GM12878 (cell line): ENCODE measurements at regions of chr3 and their contacts with region 1.

Region 1: GRCh38 chr3:14691239-14691638 is 16.3 kb downstream of the C3orf20 start:
- DNase-seq: peak; percentile 74
- ATAC-seq: peak; percentile 69
- H3K4me3 ChIP-seq: peak overlapping the region; percentile 4; the same call in 1 of the 2 replicates
- H3K27ac ChIP-seq: peak overlapping the region; percentile 76
- H3K4me1 ChIP-seq: peaks cover 47% of the 10 kb centered on the region
- H3K27me3 ChIP-seq: no peaks in the 10 kb centered on the region
- CTCF ChIP-seq: no peak
- EP300 ChIP-seq: peak; percentile 82 to 87
- POLR2A ChIP-seq: peak; percentile 47; the same call in 1 of the 2 replicates
- RAD21 ChIP-seq: no peak

Region 2: GRCh38 chr3:14680716-14681115 is 10.5 kb before region 1 on chr3:
- CTCF ChIA-PET with region 1: interaction called, 49 read pairs
- POLR2A ChIA-PET with region 1: interaction called, 4 read pairs
- RAD21 ChIA-PET with region 1: interaction called, 20 read pairs
- SMC1A ChIA-PET with region 1: interaction called, 42 read pairs
- in situ Hi-C with region 1: no loop called
- intact Hi-C with region 1: no loop called
- DNase-seq: no peak
- ATAC-seq: no peak
- H3K4me3 ChIP-seq: no peak overlapping the region
- H3K27ac ChIP-seq: no peak overlapping the region
- H3K4me1 ChIP-seq: peaks cover 11% of the 10 kb centered on the region
- H3K27me3 ChIP-seq: no peaks in the 10 kb centered on the region
- CTCF ChIP-seq: no peak
- EP300 ChIP-seq: no peak
- POLR2A ChIP-seq: no peak
- RAD21 ChIP-seq: no peak